Activated CD8-positive, alpha-beta memory T cell treated with anti-CD3 and anti-CD28 coated beads, Interleukin-2, amount 10 ng/mL, durations not matched to agents 7 days and 5 days (primary cell): ENCODE measurements at regions of chr6 and their contacts with region 1.

Region 1: GRCh38 chr6:131182991-131183425 is 47.7 kb downstream of the AKAP7 start:
- DNase-seq: peak; percentile 54
- ATAC-seq: peak; percentile 92
- H3K4me3 Mint-ChIP-seq: peak overlapping the region; percentile 43
- H3K27ac Mint-ChIP-seq: peak overlapping the region; percentile 97
- H3K4me1 Mint-ChIP-seq: peaks cover 9% of the 10 kb centered on the region
- H3K27me3 Mint-ChIP-seq: no peaks in the 10 kb centered on the region

Region 2: GRCh38 chr6:131199568-131200272 is 16.7 kb after region 1 on chr6:
- CTCF ChIA-PET with region 1: interaction called, 46 read pairs
- DNase-seq: peak; percentile 89
- ATAC-seq: peak; percentile 95
- H3K4me3 Mint-ChIP-seq: peak overlapping the region; percentile 77
- H3K27ac Mint-ChIP-seq: peak overlapping the region; percentile 96
- H3K4me1 Mint-ChIP-seq: peaks cover 58% of the 10 kb centered on the region
- H3K27me3 Mint-ChIP-seq: no peaks in the 10 kb centered on the region

Region 3: DNA sequence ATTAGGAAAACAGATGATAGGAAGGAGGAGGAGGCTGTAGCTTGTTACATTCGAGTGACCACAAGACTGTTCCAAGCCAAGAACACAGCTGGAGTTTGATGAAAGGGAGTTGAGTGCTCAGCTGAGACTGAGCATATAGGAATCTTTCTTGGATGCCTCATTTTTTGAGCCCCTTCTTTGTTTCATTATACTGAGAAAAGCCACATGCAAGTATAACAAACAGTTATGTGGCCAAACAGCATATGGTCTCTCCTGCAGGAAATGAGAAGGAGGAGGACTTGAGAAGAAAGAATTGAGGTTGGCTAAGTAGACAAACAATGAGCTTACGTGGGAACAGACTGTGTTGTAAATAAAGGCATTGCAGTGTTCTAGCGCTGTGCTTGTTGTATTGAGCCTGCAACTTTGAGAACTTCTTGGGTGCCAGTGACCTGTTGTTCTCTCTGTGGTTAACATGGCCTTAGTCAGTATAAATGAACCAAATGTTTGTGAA is 30.5 kb after region 1 on chr6:
- CTCF ChIA-PET with region 1: no interaction called
- DNase-seq: no peak
- ATAC-seq: peak; percentile 33
- H3K4me3 Mint-ChIP-seq: no peak overlapping the region
- H3K27ac Mint-ChIP-seq: no peak overlapping the region
- H3K4me1 Mint-ChIP-seq: peaks cover 24% of the 10 kb centered on the region
- H3K27me3 Mint-ChIP-seq: no peaks in the 10 kb centered on the region

Region 4: DNA sequence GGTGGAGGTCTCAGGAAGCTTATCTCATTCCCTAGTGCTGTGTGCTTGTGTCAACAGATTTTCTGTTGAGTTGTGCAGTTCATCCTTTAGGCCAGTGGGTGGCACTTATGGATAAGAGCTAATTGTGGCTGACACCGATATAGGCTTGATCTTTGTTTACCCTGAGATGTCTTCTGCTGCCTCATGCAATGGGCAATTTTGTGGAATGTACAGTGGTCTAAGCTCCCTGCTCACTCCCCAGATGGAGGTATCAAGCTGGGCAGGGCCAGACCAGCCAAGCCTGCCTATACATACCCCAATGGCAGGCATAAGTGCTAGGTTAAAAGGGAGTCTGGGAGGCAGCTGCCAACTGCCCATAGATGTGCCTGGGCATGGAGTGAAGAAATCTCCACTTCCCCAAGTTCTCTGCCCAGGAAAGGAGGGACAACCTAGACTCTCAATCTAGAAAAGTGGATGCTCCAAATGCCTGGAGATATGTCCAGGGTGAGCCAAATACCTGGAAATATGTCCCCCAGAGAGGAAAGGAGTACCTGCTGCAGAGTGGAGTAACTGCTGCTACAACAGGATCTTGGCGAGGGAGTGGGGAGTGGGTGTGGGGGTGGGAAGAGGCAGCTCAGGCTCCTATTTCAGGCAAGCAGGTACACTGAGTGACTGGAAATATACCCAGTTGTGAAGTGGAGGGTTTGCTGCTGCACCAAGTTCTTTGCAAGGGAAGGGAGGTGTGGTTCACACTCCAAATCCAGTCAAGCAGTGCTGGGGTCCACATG is 336.8 kb after region 1 on chr6:
- CTCF ChIA-PET with region 1: interaction called, 16 read pairs
- DNase-seq: peak; percentile 67
- ATAC-seq: peak; percentile 94
- H3K4me3 Mint-ChIP-seq: no peak overlapping the region
- H3K27ac Mint-ChIP-seq: no peak overlapping the region
- H3K4me1 Mint-ChIP-seq: peaks cover 12% of the 10 kb centered on the region
- H3K27me3 Mint-ChIP-seq: no peaks in the 10 kb centered on the region